PC-3 (cell line): ENCODE measurements at regions of chr16 and their contacts with region 1.

Region 1: DNA sequence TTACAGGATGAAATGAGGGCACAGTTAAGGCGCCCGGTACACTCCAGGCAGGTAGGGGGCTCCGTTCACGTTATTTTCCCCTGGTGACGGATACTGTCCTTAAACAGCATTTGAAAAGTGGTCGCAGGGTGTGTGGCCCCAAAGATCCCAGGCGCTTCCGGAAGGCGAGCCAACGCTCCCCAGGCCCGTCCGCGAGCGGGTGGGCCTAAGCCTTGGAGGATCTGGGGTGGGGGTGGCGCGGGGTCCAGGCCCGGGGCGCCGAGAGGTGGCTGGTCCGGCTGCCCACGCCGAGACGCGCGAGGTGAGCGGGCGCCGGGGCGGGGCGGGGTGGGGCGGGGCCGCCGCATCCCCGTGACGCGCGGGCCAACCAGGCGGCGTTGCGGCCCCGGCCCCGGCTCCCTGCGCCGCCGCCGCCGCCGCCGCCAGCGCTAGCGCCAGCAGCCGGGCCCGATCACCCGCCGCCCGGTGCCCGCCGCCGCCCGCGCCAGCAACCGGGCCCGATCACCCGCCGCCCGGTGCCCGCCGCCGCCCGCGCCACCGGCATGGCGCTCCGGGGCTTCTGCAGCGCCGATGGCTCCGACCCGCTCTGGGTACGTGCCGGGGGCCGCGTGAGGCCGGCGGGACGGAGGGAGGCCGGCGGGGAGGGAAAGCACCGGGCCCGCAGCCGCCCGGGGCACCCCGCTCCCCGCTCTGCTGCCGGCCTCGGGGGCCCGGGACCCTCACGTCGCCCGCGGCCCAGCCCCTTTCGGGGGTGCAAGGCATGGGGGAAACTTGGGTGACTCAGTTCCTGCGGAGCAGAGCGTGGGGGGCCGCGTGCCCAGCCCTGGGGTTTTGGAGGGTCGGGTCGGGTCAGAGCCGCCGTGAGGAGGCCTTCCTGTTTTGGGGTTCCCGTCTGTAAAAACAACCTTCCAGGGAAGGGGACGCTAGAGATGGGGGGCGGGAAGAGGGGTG is at the start of gene ABCC1:
- DNase-seq: peak; percentile 49
- ATAC-seq: peak; percentile 57
- H3K4me3 ChIP-seq: peak within 1 kb of the TSS; percentile 88
- H3K27ac ChIP-seq: peak within 1 kb of the TSS; percentile 40
- H3K4me1 ChIP-seq: peaks cover 22% of the 10 kb centered on the region
- H3K27me3 ChIP-seq: no peaks in the 10 kb centered on the region
- CTCF ChIP-seq: 0 out of 2 replicates have a peak, but pooled peaks have one; percentile 21
- total RNA-seq, gene ABCC1: 16.1 and 29.0 TPM in 2 replicates

Region 2: GRCh38 chr16:15899538-15900100 is 49.9 kb before region 1 on chr16:
- CTCF ChIA-PET with region 1: no interaction called
- POLR2A ChIA-PET with region 1: no interaction called
- intact Hi-C with region 1: loop called (anchors 1 kb)
- DNase-seq: peak; percentile 95
- ATAC-seq: peak; percentile 97
- H3K4me3 ChIP-seq: peak overlapping the region; percentile 25; the same call in 1 of the 2 replicates
- H3K27ac ChIP-seq: peak overlapping the region; percentile 79
- H3K4me1 ChIP-seq: peaks cover 37% of the 10 kb centered on the region
- H3K27me3 ChIP-seq: no peaks in the 10 kb centered on the region
- CTCF ChIP-seq: no peak

Region 3: GRCh38 chr16:16014329-16015144 is 65.1 kb after region 1 on chr16:
- CTCF ChIA-PET with region 1: no interaction called
- POLR2A ChIA-PET with region 1: no interaction called
- intact Hi-C with region 1: loop called (anchors 5 kb)
- DNase-seq: peak; percentile 88
- ATAC-seq: peak; percentile 87
- H3K4me3 ChIP-seq: no peak overlapping the region
- H3K27ac ChIP-seq: peak overlapping the region; percentile 7; the same call in 1 of the 2 replicates
- H3K4me1 ChIP-seq: peaks cover 38% of the 10 kb centered on the region
- H3K27me3 ChIP-seq: no peaks in the 10 kb centered on the region
- CTCF ChIP-seq: no peak